Naive thymus-derived CD4-positive, alpha-beta T cell (primary cell): ENCODE measurements at regions of chr19 and their contacts with region 1.

Region 1: GRCh38 chr19:12881172-12881808 is at the start of gene DNASE2:
- DNase-seq: peak; percentile 69 to 89 (median 81)
- ATAC-seq: peak; percentile 81
- H3K4me3 ChIP-seq: peak within 1 kb of the TSS; percentile 72
- H3K4me3 Mint-ChIP-seq: peak within 1 kb of the TSS; percentile 87 to 94 (median 88)
- H3K27ac ChIP-seq: peak within 1 kb of the TSS; percentile 77
- H3K27ac Mint-ChIP-seq: peak within 1 kb of the TSS; percentile 76 to 94 (median 89)
- H3K4me1 ChIP-seq: peaks cover 10 to 11% of the 10 kb centered on the region in 2 donors
- H3K4me1 Mint-ChIP-seq: peaks cover 20 to 39% (median 30%) of the 10 kb centered on the region in 7 donors
- H3K27me3 ChIP-seq: no peaks in the 10 kb centered on the region
- H3K27me3 Mint-ChIP-seq: peaks cover 0 to 1% (median 0%) of the 10 kb centered on the region in 5 donors
- total RNA-seq, gene DNASE2: 14.2 to 29.9 (median 28.1) TPM

Region 2: DNA sequence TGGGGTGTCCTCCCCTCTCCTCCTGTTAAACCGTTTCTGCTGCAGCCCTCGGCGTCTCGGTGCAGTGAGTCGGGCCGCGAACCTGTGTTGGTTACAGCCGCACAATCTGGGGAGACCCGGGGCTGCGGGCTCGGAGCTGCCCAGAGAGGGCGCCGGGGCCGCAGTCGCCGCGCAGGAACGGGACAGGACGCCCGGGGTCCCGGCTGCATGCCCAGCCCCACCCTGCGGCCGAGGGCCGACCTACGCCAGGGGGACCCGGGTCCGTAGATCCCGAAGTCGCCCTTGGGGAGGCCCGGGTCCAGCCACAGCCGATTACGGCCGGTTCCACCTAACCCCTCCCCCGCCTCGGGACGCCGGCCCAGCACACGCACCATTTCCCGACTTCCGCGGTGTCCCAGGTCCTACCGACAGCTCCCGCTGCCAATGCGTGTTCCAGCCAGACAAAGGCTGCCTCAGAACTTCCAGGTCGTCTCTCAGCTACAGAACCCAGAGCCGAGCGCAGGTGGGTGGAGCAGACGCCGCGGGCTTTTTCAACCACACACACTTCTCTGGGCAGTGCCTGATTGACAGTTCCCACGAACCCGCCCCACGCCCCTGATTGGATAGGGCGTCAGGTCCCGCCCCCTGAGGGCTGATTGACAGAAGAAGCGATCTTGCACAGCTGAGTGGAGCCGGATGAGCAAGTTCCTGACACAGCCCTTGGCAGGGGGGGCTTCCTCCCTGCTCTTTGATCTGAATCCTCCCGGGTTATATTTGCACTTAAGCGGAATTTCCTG is 440.6 kb before region 1 on chr19 and contains the start of gene ZNF443:
- CTCF ChIA-PET with region 1: no interaction called
- POLR2A ChIA-PET with region 1: no interaction called
- intact Hi-C with region 1: no loop called
- DNase-seq: peak; percentile 93 to 99 (median 98)
- ATAC-seq: peak; percentile 99
- H3K4me3 ChIP-seq: peak within 1 kb of the TSS; percentile 80
- H3K4me3 Mint-ChIP-seq: peak within 1 kb of the TSS; percentile 97 to 100 (median 100)
- H3K27ac ChIP-seq: peak within 1 kb of the TSS; percentile 72
- H3K27ac Mint-ChIP-seq: peak within 1 kb of the TSS; percentile 84 to 99 (median 96)
- H3K4me1 ChIP-seq: no peaks in the 10 kb centered on the region
- H3K4me1 Mint-ChIP-seq: peaks cover 12 to 34% (median 24%) of the 10 kb centered on the region in 7 donors
- H3K27me3 ChIP-seq: no peaks in the 10 kb centered on the region
- H3K27me3 Mint-ChIP-seq: no peaks in the 10 kb centered on the region
- total RNA-seq, gene ZNF443: 3.0 to 9.1 (median 4.1) TPM

Region 3: GRCh38 chr19:12867120-12868099 is 13.9 kb before region 1 on chr19:
- CTCF ChIA-PET with region 1: interaction called, 3 read pairs
- POLR2A ChIA-PET with region 1: interaction called, 6 read pairs
- intact Hi-C with region 1: loop called (anchors 2 kb)
- DNase-seq: peak; percentile 56 to 82 (median 66)
- ATAC-seq: peak; percentile 88
- H3K4me3 ChIP-seq: peak overlapping the region; percentile 69
- H3K4me3 Mint-ChIP-seq: peak overlapping the region; percentile 65 to 90 (median 84)
- H3K27ac ChIP-seq: peak overlapping the region; percentile 51
- H3K27ac Mint-ChIP-seq: peak overlapping the region in 4 of 9 donors; percentile 11 to 88 (median 63)
- H3K4me1 ChIP-seq: peaks cover 0 to 4% of the 10 kb centered on the region in 2 donors
- H3K4me1 Mint-ChIP-seq: peaks cover 6 to 18% (median 13%) of the 10 kb centered on the region in 7 donors
- H3K27me3 ChIP-seq: no peaks in the 10 kb centered on the region
- H3K27me3 Mint-ChIP-seq: peaks cover 0 to 5% (median 0%) of the 10 kb centered on the region in 5 donors

Region 4: DNA sequence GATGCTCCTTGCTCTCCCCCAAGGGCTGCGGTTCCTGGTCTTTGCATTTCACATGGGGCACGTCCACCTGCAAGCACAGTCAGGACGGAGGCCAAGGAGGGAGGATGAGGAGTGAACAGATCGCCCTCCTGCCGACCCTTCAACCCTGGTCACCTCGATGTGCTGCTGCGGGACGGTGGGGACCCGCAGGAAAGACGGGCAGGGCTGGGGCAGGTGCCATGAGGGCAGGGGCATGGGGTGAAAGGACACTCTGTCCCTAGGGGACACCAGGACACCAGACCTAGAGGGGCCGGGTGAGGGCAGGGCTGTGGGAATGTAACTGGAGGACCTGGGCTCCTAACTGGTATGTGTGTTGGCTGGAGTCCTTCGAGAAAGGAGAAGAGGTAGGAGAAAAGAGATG is 37.0 kb after region 1 on chr19:
- CTCF ChIA-PET with region 1: interaction called, 8 read pairs
- POLR2A ChIA-PET with region 1: interaction called, 9 read pairs
- intact Hi-C with region 1: loop called (anchors 1 to 5 kb)
- DNase-seq: no peak
- ATAC-seq: no peak
- H3K4me3 ChIP-seq: no peak overlapping the region
- H3K4me3 Mint-ChIP-seq: peak overlapping the region in 9 of 10 donors; percentile 23 to 87 (median 76)
- H3K27ac ChIP-seq: no peak overlapping the region
- H3K27ac Mint-ChIP-seq: peak overlapping the region in 6 of 9 donors; percentile 48 to 96 (median 91)
- H3K4me1 ChIP-seq: peaks cover 12 to 27% of the 10 kb centered on the region in 2 donors
- H3K4me1 Mint-ChIP-seq: peaks cover 9 to 51% (median 34%) of the 10 kb centered on the region in 7 donors
- H3K27me3 ChIP-seq: no peaks in the 10 kb centered on the region
- H3K27me3 Mint-ChIP-seq: no peaks in the 10 kb centered on the region

Region 5: DNA sequence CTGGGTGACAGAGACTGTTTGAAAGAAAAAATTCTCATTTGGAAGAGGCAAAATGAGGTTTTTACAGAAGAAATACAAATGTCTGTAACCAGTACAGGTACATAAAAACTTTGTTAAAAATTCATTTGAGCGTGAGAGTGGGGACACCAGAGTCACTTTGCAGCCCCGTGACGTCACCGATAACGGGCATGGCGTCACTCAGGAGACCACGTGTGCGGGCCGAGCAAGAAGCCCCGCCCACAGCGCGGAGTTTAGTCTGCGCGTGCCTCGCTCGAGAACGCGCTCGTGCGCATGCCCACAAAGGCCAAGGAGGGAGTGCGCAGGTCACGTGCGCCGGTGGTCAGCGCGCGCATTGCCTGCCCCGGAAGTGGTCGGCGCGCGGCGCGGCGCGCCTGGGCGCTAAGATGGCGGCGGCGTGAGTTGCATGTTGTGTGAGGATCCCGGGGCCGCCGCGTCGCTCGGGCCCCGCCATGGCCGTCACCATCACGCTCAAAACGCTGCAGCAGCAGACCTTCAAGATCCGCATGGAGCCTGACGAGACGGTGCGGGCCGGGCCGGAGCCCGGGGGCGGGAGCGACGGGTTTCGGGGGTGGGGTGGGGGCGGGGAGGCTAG is 64.3 kb after region 1 on chr19 and contains the start of gene RAD23A:
- CTCF ChIA-PET with region 1: interaction called, 6 read pairs
- POLR2A ChIA-PET with region 1: interaction called, 6 read pairs
- intact Hi-C with region 1: loop called in 1 of 2 experiments (anchors 1 kb)
- DNase-seq: peak; percentile 96 to 99 (median 97)
- ATAC-seq: peak; percentile 94
- H3K4me3 ChIP-seq: peak within 1 kb of the TSS; percentile 67
- H3K4me3 Mint-ChIP-seq: peak within 1 kb of the TSS; percentile 88 to 97 (median 92)
- H3K27ac ChIP-seq: peak within 1 kb of the TSS; percentile 86
- H3K27ac Mint-ChIP-seq: peak within 1 kb of the TSS; percentile 93 to 99 (median 97)
- H3K4me1 ChIP-seq: peaks cover 21 to 26% of the 10 kb centered on the region in 2 donors
- H3K4me1 Mint-ChIP-seq: peaks cover 24 to 61% (median 46%) of the 10 kb centered on the region in 7 donors
- H3K27me3 ChIP-seq: no peaks in the 10 kb centered on the region
- H3K27me3 Mint-ChIP-seq: peaks cover 0 to 3% (median 0%) of the 10 kb centered on the region in 5 donors
- total RNA-seq, gene RAD23A: 75.0 to 111 (median 96.4) TPM

Region 6: DNA sequence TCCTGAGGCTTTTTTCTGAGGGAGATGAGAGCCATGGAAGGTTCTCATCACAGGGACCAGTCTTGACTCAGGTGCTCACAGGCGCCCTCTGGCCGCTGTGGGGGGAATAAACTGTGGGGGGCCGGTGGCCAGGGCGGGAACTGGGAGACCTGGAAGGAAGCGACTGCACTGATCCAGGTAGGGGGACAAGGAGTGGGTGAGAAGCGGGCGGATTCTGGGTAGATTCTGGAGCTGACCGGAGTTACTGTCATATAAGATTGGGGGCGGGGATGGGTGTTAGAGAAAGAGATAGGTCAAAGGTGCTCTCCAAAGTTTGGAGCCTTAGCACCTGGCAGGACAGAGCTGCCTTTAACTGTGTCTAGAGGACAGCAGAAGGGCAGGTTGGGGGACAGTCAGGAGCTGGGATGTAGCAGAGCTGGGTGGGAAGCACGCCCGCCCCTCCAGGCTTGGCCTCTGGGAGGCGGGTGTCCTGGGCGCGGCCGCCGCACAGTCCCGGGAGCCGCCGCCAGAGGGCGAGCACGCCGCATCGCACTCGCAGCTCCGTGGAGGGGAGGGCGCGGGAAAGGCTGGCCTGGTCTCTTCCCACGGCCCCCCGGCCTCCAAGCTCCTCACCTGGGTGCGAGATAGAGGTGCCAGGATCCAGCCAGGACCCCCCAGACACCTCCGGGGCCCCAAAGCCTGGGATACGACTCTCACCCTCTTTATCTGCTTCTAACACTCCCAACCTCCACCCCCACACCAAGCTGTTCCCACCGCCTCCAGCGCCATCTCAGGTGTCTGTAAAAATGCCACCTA is 83.9 kb after region 1 on chr19:
- CTCF ChIA-PET with region 1: interaction called, 42 read pairs
- POLR2A ChIA-PET with region 1: interaction called, 7 read pairs
- intact Hi-C with region 1: loop called (anchors 1 kb)
- DNase-seq: peak; percentile 57 to 91 (median 78)
- ATAC-seq: peak; percentile 98
- H3K4me3 ChIP-seq: peak overlapping the region; percentile 87
- H3K4me3 Mint-ChIP-seq: peak overlapping the region; percentile 78 to 92 (median 88)
- H3K27ac ChIP-seq: peak overlapping the region; percentile 21
- H3K27ac Mint-ChIP-seq: peak overlapping the region in 8 of 9 donors; percentile 10 to 86 (median 54)
- H3K4me1 ChIP-seq: peaks cover 3 to 9% of the 10 kb centered on the region in 2 donors
- H3K4me1 Mint-ChIP-seq: peaks cover 5 to 11% (median 7%) of the 10 kb centered on the region in 7 donors
- H3K27me3 ChIP-seq: no peaks in the 10 kb centered on the region
- H3K27me3 Mint-ChIP-seq: no peaks in the 10 kb centered on the region